Posterior vena cava (tissue), 2 donors: ENCODE measurements at regions of chr16 and their contacts with region 1.

Region 1: DNA sequence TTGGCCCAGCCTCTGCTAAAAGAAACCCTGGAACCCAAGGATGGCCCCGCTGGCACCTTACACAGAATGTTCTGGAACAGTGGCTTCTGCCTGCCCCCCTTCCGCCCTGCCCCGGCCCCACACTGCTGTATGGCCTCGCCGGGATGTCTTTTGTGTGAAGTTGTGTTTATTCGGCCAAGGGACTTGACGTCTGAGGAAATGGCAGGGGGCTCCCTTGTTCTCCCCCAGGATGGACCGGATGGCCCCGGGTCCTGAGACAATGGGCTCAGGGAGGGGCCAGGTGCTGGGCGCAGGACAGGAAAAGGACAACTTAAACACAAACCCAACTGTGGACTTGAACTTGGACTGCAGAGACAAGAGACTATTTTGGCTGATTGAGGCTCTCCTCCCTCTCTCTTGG is 81.6 kb upstream of the GSE1 start:
- DNase-seq: no peak

Region 2: DNA sequence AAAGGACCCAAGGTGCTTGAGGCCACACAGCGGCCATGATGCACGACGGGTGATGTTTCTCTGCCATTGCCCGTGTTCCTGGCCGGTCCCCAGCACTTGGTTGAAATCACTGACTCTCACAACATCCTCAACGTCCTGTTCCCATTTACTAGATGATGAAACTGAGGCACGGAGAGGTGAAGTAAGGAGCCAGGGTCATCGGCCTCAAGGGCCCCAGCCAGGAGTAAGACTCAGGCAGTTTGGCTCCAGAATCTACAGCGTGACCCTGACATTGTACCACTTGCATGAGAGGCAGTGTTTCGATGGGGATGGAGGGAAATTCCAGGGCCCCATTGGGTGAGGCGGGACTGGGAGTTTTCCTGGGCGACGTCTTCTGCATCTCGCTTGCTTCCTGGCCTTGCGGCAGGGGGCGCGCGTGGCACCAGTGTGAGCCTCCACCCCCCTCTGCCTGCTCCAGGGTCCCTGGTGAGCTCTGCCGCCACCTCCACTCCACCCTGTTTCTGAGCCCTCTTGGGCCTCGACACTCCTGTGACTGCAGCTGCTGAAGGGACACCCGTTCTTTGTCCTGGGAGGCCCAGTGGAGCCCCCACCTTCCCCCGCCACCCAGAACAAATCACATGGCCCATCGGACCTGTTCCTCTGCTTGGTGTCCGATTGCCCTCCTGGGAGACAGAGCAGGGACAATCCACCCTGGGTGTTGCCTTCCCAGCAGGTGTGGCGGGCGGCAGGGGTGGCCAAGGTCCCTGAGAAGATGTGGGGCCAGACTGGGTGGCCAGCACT is 51.4 kb before region 1 on chr16:
- intact Hi-C with region 1: no loop called
- DNase-seq: no peak

Region 3: DNA sequence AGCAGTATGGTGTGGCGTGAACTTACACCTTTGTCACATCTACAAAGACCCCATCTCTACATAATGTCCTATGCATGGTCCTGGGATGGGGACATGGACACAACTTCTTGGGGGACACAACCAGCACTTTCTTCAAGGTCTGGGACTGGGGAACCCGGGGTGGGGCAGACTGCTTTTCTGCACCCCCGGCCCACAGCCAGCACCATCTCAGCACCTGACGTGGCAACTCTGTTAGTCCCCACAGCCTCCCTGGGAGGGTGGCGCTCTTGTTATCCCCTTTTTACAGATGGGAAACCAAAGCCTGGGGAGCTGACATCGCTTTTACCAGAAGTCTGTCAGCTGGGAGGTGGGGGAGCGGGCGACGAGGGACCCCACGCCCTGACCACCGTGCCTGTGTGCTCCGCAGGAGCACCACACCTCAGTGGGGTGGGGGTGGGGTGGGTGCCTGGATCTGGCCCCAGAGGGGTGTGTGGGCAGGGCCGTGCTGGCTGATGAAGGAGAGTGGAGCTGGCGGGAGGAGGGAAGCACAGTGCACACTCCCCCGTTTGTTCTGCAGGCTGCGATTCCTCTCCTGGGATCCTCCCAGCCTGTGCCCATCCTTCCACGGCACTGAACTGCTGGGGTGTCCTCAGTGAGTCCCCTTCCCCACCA is 33.8 kb before region 1 on chr16:
- intact Hi-C with region 1: loop called in 1 of 2 experiments (anchors 1 kb)
- DNase-seq: no peak

Region 4: GRCh38 chr16:85511938-85512807 is 19.3 kb before region 1 on chr16:
- intact Hi-C with region 1: no loop called
- DNase-seq: no peak